ENCODE measurements at regions of chr5 and their contacts with region 1.

Region 1: DNA sequence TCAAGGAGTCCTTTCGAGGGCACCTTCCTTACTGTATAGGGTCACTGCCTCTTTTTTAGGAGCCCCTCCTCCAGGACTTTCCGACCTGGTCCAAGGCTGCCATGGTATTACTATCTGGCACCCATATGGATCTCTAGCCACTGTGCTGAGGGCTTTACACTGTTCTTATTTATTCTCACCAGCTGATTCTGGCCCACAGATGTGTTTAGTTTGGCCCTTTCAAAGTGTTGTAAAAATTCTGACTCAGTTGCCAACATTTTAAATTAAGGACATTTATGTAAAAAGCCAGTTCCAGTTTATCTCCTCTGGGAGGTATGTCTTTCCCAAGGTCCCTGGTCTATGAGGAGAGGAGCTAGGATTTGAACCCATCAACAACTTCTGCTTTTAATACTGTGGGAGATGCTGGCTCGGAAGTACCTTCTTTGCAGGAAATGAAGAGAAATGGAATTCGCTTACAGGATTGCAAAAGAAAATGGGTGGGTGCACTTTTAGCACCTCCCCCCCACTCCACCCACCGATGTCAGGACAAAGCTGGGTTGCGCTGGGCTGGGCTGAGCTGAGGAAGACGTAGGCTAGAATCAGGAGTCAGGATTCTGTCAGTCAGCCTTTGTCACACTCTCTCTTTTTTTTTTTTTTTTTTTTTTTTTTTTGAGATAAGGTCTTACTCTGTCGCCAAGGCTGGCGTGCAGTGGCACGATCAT is 7.8 kb downstream of the JADE2 start:
- DNase-seq: peak; percentile 90
- ATAC-seq: peak; percentile 84
- H3K4me3 ChIP-seq: no peak overlapping the region
- H3K27ac ChIP-seq: peak overlapping the region in 1 of 2 donors; percentile 25
- H3K4me1 ChIP-seq: peaks cover 6 to 7% of the 10 kb centered on the region in 2 donors
- H3K27me3 ChIP-seq: no peaks in the 10 kb centered on the region

Region 2: DNA sequence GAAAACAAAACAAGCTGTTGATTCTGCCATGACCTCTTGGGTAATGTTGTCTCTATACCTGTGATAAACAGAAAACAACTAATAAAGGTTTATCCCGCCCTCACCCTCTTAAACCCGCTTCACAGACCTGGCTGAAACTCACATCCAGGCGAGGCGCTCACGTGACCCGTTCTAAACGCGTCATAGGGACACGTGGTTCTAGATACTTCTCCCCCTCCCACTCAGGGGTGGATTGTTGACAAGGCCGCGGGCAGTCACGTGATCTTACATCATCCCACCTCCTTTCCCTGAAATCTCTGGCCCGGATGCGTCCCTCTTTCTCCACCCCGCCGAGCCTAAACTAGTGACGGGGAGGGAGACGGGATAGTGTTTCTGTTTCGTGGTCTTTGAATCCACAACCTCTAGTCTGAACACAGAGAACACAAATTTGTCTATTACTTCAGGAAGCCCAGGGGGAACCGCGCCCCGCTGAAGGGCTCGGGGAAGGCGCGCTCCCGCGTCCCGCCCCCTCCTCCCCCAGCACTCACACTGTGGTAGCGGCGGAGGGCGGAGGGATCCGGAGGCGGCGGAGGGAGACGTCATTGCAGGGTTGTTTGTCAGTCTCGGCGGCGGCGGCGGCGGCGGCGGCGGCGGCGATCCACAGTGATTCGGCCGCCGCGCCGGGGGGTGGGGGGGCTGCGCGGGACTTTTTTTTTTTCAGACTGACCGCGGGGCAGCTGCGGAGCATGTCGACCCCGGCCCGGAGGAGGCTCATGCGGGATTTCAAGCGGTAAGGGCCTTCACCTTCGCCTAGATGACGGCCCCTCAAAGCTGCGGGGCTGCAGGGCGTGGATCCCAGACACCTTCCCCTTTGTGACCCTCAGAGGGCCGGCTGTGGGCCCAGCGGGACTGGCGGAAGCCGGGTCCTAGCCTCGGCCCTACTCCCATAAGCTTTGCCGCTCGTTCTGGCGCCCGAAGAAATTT is 162.1 kb before region 1 on chr5 and contains the start of gene UBE2B:
- intact Hi-C with region 1: loop called in 1 of 2 experiments (anchors 5 kb)
- DNase-seq: peak; percentile 98 to 99
- ATAC-seq: peak; percentile 99
- H3K4me3 ChIP-seq: peak within 1 kb of the TSS; percentile 65 to 79
- H3K27ac ChIP-seq: peak within 1 kb of the TSS; percentile 86 to 99
- H3K4me1 ChIP-seq: no peaks in the 10 kb centered on the region
- H3K27me3 ChIP-seq: no peaks in the 10 kb centered on the region
- total RNA-seq, gene UBE2B: 96.6 to 99.2 TPM

Region 3: GRCh38 chr5:134543820-134544614 is 10.8 kb after region 1 on chr5:
- intact Hi-C with region 1: loop called in 1 of 2 experiments (anchors 2 kb)
- DNase-seq: peak; percentile 55 to 68
- ATAC-seq: peak; percentile 6
- H3K4me3 ChIP-seq: no peak overlapping the region
- H3K27ac ChIP-seq: peak overlapping the region in 1 of 2 donors; percentile 31
- H3K4me1 ChIP-seq: peaks cover 4% of the 10 kb centered on the region in 2 donors
- H3K27me3 ChIP-seq: no peaks in the 10 kb centered on the region